ENCODE measurements at regions of chr1 and their contacts with region 1.

Region 1: DNA sequence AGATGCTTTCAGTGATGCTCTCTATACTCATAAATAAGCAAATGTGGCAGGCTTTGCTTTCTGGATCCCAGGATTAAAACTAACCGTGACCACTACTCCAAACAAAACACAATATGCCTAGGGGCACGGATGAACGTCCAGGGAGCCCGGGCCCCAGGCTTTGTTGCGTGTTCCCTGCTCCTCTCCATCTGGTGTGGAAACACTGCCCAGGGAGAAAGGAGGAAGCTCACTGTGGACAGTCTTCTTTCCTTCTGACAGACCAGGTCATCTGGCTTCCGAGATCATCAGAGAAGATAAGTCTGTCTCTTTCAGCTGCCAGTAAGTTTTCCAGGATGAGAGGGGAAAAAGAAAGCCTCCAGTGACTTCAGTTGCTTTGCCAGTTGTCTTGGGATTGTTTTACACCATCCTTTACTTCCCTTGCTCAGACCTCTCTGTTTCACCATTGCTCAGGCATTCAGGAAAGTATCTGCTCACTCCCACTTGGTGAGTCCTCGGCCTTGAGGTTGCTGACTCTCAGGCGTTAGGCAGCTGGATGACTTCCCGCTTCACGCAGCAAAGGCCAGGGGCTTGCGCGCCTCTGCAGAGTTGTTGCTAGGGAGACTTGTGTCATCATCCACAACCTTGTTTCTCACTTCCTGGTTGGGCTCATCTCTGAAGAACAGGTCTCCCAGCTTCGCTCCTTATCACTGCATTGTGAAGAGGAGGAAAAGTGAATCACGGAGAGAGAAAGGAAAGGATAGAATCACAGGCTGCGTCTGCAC is 20.6 kb upstream of the PGD start:
- DNase-seq: no peak
- ATAC-seq: peak; percentile 70

Region 2: GRCh38 chr1:10429868-10430215 is 51.6 kb after region 1 on chr1:
- intact Hi-C with region 1: loop called (anchors 5 kb)
- DNase-seq: no peak
- ATAC-seq: peak; percentile 6

Measured in sciatic nerve (tissue), 2 donors.